ENCODE measurements at regions of chr9 and their contacts with region 1.

Region 1: GRCh38 chr9:129783516-129784361 is 19.2 kb upstream of the TOR1B start:
- DNase-seq: peak; percentile 44 to 68
- ATAC-seq: peak; percentile 80 to 93 (median 90)
- H3K4me3 ChIP-seq: no peak overlapping the region
- H3K27ac ChIP-seq: no peak overlapping the region
- H3K4me1 ChIP-seq: no peaks in the 10 kb centered on the region
- H3K27me3 ChIP-seq: peaks cover 0 to 6% (median 0%) of the 10 kb centered on the region in 3 donors
- CTCF ChIP-seq: peak; percentile 86

Region 2: DNA sequence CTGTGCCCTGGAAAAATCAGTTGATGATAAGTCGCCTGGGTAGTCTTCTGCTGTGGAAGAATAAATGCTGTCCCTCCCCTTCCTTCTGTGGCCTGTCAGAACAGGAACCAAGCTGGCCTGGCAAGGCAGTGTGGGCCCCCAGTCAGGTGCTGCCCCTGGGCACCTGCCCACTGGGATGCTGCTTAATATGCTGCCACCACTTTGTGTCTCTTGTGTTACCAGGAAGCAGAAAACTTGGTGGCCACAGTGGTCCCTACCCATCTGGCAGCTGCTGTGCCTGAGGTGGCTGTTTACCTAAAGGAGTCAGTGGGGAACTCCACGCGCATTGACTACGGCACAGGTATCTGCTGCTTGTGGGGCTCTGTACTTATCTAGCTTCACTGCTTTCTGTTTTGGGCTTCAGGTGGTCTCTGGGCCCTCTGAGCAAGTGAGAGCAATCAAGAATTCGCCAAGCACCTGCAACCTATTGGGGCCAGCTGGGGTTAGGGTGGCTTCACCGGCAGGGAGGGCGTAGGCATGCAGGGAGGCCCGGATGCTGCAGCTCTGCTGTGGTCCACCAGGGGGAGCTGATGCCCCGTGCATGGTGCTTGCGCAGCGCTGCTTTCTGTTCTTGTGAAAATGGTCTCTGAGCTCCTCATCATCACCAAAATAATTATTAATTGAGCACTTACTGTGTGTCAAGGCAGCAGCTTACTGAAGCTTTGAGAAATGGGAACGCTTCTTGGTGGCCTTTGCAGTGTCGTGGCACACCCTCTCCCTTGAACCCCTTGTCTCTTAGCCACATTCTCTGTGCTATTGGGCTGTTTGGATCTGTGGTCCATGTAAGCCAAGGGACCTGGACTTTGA is 652.2 kb before region 1 on chr9:
- intact Hi-C with region 1: loop called in 1 of 2 experiments (anchors 5 kb)
- DNase-seq: peak; percentile 77 to 89
- ATAC-seq: peak; percentile 85 to 90 (median 88)
- H3K4me3 ChIP-seq: no peak overlapping the region
- H3K27ac ChIP-seq: no peak overlapping the region
- H3K4me1 ChIP-seq: peaks cover 7% of the 10 kb centered on the region
- H3K27me3 ChIP-seq: no peaks in the 10 kb centered on the region
- CTCF ChIP-seq: peak; percentile 97

Region 3: GRCh38 chr9:129641746-129642513 is 141.8 kb before region 1 on chr9 and contains the start of gene ASB6:
- intact Hi-C with region 1: loop called (anchors 2 to 5 kb)
- DNase-seq: peak; percentile 99
- ATAC-seq: peak; percentile 89 to 95 (median 94)
- H3K4me3 ChIP-seq: peak within 1 kb of the TSS; percentile 97
- H3K27ac ChIP-seq: peak within 1 kb of the TSS; percentile 86
- H3K4me1 ChIP-seq: peaks cover 17% of the 10 kb centered on the region
- H3K27me3 ChIP-seq: no peaks in the 10 kb centered on the region
- CTCF ChIP-seq: peak; percentile 98
- total RNA-seq, gene ASB6: 6.3 to 11.9 (median 8.6) TPM

Region 4: DNA sequence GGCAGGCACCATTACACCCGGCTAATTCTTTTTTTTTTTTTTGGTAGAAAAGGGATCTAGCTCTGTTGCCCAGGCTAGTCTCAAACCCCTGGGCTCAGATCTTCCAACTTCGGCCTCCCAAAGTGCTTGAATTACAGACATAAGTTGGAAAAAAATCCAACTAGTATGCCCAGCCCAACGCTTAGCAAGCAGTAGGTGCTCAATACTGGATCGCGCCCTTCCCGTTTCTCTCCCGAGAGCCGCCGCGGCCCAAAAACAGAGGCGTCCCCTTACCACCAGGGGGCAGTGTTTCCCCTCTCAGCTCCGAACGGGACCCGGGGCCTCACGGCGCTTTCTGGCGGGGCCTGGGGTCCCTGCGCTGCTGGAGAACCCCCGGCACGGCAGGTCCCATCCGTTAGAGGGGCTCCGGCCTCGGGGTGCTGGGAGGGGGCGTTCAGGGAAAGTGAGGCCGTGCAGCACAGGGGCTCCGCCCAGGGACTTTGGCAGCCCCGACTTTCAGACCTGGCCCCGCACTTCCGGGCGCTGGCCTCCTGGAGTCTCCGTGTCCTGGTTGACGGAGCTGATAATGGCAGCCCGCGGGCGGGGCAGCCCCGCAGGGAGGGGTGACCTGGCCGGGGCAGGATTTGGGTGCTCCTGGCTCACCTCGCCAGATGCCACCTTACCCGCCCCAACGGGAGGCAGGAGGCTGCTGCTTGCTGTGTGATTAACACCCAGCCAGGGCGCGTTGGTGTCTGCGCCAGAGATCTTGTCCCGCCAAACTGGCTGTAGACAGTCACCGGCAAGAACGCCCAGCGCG is 46.1 kb before region 1 on chr9:
- intact Hi-C with region 1: loop called (anchors 2 kb)
- DNase-seq: peak; percentile 85 to 90
- ATAC-seq: peak; percentile 88 to 98 (median 95)
- H3K4me3 ChIP-seq: peak overlapping the region; percentile 79
- H3K27ac ChIP-seq: peak overlapping the region; percentile 46
- H3K4me1 ChIP-seq: no peaks in the 10 kb centered on the region
- H3K27me3 ChIP-seq: peaks cover 0 to 14% (median 0%) of the 10 kb centered on the region in 3 donors
- CTCF ChIP-seq: peak; percentile 95

Measured in psoas muscle (tissue), 8 donors.